MCF 10A (cell line): ENCODE measurements at regions of chr12 and their contacts with region 1.

Region 1: DNA sequence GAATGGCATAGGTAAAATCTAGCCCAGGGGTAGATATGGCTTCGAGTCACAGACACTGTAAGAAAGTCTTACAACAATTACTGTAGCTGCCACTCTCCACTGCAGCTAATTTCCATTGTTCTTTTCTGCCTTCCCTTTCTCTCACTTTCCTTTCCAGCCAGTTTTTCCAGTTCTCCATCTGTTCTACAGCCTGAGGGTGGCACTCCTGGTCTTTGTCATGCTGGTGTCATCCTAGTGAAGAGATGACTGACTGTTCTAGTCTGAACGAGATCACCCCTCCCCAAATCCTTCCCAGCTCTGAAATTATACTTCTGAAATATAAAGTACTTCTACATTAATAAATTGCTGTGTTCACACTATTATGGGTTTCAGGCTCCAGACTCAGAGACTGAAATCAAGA is 74.2 kb upstream of the CSRP2 start:
- DNase-seq: peak; percentile 30
- H3K4me3 Mint-ChIP-seq: no peak overlapping the region
- H3K27ac Mint-ChIP-seq: no peak overlapping the region
- H3K4me1 Mint-ChIP-seq: no peaks in the 10 kb centered on the region
- H3K27me3 Mint-ChIP-seq: no peaks in the 10 kb centered on the region
- CTCF ChIP-seq: peak; percentile 16

Region 2: GRCh38 chr12:76529226-76529918 is 423.6 kb before region 1 on chr12:
- CTCF ChIA-PET with region 1: no interaction called
- POLR2A ChIA-PET with region 1: no interaction called
- intact Hi-C with region 1: no loop called
- DNase-seq: peak; percentile 45
- H3K4me3 Mint-ChIP-seq: no peak overlapping the region
- H3K27ac Mint-ChIP-seq: no peak overlapping the region
- H3K4me1 Mint-ChIP-seq: peaks cover 6% of the 10 kb centered on the region
- H3K27me3 Mint-ChIP-seq: no peaks in the 10 kb centered on the region
- CTCF ChIP-seq: no peak

Region 3: GRCh38 chr12:76706101-76706500 is 246.9 kb before region 1 on chr12:
- CTCF ChIA-PET with region 1: no interaction called
- POLR2A ChIA-PET with region 1: no interaction called
- intact Hi-C with region 1: no loop called
- DNase-seq: no peak
- H3K4me3 Mint-ChIP-seq: no peak overlapping the region
- H3K27ac Mint-ChIP-seq: no peak overlapping the region
- H3K4me1 Mint-ChIP-seq: peaks cover 7% of the 10 kb centered on the region
- H3K27me3 Mint-ChIP-seq: no peaks in the 10 kb centered on the region
- CTCF ChIP-seq: no peak

Region 4: DNA sequence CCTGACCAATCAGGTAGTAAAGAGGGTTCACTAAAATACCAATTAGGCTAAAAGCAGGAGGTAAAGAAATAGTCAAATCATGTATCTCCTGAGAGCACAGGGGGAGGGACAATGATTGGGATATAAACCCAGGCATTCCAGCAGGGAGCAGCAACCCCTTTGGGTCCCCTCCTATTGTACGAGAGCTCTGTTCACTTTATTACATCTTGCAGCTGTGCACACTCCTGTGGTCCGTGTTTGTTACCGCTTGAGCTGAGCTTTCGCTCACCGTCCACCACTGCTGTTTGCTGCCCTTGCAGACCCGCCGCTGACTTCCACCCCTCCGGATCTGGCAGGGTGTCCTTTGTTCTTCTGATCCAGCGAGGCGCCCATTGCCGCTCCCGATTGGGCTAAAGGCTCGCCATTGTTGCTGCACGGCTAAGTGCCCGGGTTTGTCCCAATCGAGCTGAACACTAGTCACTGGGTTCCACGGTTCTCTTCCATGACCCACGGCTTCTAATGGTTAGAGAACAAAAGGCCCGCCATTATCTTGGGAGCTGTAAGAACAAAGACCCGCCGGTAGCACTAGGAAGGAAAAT is 48.3 kb after region 1 on chr12:
- CTCF ChIA-PET with region 1: interaction called, 200 read pairs
- POLR2A ChIA-PET with region 1: no interaction called
- intact Hi-C with region 1: no loop called
- DNase-seq: no peak
- H3K4me3 Mint-ChIP-seq: no peak overlapping the region
- H3K27ac Mint-ChIP-seq: no peak overlapping the region
- H3K4me1 Mint-ChIP-seq: no peaks in the 10 kb centered on the region
- H3K27me3 Mint-ChIP-seq: no peaks in the 10 kb centered on the region
- CTCF ChIP-seq: no peak

Region 5: DNA sequence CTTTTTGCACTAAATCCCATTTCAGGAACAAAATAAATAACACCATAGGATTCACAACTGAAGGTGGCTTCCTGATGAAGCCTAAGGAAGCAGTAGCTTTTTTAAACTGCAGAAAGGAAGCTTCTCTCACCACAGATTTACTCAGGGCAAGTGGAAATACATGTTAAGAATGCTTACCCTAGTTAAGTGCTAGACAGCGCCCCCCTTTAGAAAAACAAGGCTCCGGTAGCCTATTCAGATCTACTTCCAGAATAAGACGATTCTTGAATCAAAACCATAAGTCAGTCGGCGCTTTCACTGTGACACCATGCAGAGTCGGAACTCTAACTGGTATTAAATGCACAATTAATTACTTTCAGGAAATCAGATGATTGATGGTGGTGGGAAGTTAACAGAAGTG is 70.5 kb after region 1 on chr12:
- CTCF ChIA-PET with region 1: interaction called, 22 read pairs
- POLR2A ChIA-PET with region 1: no interaction called
- intact Hi-C with region 1: no loop called
- DNase-seq: no peak
- H3K4me3 Mint-ChIP-seq: no peak overlapping the region
- H3K27ac Mint-ChIP-seq: peak overlapping the region; percentile 65
- H3K4me1 Mint-ChIP-seq: no peaks in the 10 kb centered on the region
- H3K27me3 Mint-ChIP-seq: no peaks in the 10 kb centered on the region
- CTCF ChIP-seq: no peak